ENCODE measurements at regions of chr11 and their contacts with region 1.

Region 1: DNA sequence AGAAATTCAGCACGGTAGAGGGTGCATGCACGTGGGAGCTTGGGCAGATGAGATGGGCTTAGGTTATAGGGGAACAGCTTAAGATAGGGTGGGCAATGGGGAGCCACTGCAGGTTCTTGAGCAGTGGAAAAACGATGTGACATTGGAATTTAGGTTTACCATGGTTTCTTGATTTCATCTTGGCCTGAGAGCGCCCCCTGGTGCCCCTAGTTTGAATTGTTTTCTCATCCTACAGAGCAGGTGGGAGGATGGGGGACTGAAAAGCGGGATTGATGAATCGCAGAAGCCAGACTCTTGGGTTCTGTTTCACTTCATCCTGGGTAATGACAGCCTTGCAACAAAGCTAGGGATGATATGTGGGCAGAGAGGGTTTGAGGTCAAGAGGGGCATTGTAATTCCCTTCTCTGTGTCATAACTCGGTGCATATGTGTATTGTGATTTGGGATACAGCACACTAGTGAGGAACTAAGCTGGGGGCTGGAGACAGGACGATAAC is 6.7 kb upstream of the MCAM start:
- DNase-seq: peak; percentile 69 to 80 (median 74)
- H3K4me3 ChIP-seq: no peak overlapping the region
- H3K4me3 Mint-ChIP-seq: peak overlapping the region in 4 of 8 donors; percentile 15 to 68 (median 40)
- H3K27ac ChIP-seq: no peak overlapping the region
- H3K27ac Mint-ChIP-seq: peak overlapping the region in 3 of 7 donors; percentile 38 to 82 (median 47)
- H3K4me1 ChIP-seq: peaks cover 40% of the 10 kb centered on the region
- H3K4me1 Mint-ChIP-seq: peaks cover 15 to 34% (median 24%) of the 10 kb centered on the region in 4 donors
- H3K27me3 ChIP-seq: no peaks in the 10 kb centered on the region
- H3K27me3 Mint-ChIP-seq: peaks cover 0 to 5% of the 10 kb centered on the region in 2 donors

Region 2: DNA sequence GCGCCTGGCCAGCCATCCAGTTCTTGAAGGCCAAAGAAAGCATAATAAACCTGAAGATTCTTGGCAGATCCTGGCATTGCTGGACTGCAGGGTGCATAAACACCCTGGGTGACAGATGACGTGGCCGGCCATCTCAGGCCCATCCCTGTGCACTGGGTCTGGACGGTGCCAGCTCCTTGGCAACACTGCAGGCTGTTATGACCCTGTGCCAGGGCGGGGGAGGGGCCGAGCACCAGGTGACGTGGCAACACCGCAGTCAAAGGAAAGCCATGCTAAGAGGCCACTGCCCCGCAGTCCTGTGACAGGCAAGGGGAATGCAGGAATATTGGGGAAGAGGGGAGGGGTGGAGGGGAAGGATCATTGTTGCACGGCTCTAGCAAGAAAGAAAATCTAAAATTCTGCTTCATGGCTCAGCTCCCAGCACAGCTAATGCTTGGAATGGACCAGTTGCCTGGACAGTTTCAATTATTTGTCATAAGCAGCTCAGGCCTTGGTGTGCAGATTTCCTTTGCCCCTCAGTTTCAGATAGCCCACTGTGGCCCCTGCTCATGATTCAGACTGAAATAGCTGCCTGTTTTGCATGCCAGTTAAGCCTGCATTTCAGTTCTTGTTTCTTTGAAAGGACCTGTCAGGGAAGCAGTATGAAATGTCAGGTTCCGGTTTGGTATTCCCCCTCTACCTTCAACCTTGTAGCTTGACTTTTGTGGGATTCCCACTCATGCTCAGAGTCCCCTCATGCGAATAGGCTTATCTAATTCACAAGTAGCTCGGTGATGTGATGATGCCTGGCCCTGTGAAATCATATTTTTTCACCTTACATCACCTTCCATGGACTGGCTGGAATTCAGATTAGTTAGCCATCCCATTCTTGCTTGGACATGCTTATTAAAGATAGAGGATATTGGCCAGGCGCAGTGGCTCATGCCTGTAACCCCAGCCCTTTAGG is 502.9 kb before region 1 on chr11:
- CTCF ChIA-PET with region 1: no interaction called
- POLR2A ChIA-PET with region 1: no interaction called
- intact Hi-C with region 1: no loop called
- DNase-seq: no peak
- H3K4me3 ChIP-seq: no peak overlapping the region
- H3K4me3 Mint-ChIP-seq: peak overlapping the region in 1 of 8 donors; percentile 34
- H3K27ac ChIP-seq: no peak overlapping the region
- H3K27ac Mint-ChIP-seq: peak overlapping the region in 3 of 7 donors; percentile 12 to 66 (median 62)
- H3K4me1 ChIP-seq: peaks cover 9% of the 10 kb centered on the region
- H3K4me1 Mint-ChIP-seq: peaks cover 5 to 9% (median 6%) of the 10 kb centered on the region in 4 donors
- H3K27me3 ChIP-seq: no peaks in the 10 kb centered on the region
- H3K27me3 Mint-ChIP-seq: no peaks in the 10 kb centered on the region

Region 3: DNA sequence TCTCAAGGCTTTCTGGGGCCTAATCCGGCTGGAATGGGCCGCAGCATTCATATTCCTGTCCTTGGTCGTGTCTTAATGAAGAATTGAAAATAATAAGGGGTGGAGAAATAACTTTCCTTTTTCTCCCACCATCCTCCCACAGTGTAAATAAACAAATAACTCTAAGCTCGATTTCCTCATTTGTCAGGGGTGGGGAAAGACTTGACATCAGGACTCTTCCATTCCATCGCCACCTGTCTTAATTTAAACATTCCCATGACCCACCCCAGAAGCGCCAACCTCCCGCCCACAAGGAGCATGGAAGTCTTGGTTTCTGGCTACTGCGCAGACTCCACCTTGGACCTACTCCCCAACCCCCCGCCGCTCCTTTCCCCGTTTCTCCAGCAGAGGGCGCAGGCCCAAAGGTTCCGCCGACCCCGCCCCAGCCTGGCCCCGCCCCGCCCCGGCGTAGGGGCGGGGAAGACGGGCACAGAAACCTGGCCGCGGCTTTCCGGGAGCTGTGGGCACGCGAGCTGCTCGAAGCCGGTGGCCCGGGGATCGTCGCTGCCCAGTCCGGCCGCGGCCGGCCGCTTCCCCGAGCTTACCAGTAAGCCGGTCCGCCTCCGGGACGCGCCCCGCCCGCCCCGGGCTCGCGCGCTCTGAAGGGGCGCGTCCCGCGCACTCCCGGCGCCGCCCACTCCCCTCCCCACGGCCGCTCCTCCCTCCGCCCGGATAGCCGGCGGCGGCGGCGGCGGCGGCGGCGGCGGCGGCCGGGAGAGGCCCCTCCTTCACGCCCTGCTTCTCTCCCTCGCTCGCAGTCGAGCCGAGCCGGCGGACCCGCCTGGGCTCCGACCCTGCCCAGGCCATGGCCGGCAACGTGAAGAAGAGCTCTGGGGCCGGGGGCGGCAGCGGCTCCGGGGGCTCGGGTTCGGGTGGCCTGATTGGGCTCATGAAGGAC is 117.7 kb before region 1 on chr11 and contains the start of gene CBL:
- CTCF ChIA-PET with region 1: interaction called, 45 read pairs
- POLR2A ChIA-PET with region 1: interaction called, 22 read pairs
- intact Hi-C with region 1: loop called (anchors 1 kb)
- DNase-seq: peak; percentile 91 to 95 (median 92)
- H3K4me3 ChIP-seq: peak within 1 kb of the TSS; percentile 64 to 94
- H3K4me3 Mint-ChIP-seq: peak within 1 kb of the TSS; percentile 91 to 100 (median 96)
- H3K27ac ChIP-seq: peak within 1 kb of the TSS; percentile 77
- H3K27ac Mint-ChIP-seq: peak within 1 kb of the TSS; percentile 80 to 96 (median 94)
- H3K4me1 ChIP-seq: peaks cover 35% of the 10 kb centered on the region
- H3K4me1 Mint-ChIP-seq: peaks cover 15 to 54% (median 28%) of the 10 kb centered on the region in 4 donors
- H3K27me3 ChIP-seq: no peaks in the 10 kb centered on the region
- H3K27me3 Mint-ChIP-seq: no peaks in the 10 kb centered on the region
- total RNA-seq, gene CBL: 39.5 to 39.8 TPM

Region 4: DNA sequence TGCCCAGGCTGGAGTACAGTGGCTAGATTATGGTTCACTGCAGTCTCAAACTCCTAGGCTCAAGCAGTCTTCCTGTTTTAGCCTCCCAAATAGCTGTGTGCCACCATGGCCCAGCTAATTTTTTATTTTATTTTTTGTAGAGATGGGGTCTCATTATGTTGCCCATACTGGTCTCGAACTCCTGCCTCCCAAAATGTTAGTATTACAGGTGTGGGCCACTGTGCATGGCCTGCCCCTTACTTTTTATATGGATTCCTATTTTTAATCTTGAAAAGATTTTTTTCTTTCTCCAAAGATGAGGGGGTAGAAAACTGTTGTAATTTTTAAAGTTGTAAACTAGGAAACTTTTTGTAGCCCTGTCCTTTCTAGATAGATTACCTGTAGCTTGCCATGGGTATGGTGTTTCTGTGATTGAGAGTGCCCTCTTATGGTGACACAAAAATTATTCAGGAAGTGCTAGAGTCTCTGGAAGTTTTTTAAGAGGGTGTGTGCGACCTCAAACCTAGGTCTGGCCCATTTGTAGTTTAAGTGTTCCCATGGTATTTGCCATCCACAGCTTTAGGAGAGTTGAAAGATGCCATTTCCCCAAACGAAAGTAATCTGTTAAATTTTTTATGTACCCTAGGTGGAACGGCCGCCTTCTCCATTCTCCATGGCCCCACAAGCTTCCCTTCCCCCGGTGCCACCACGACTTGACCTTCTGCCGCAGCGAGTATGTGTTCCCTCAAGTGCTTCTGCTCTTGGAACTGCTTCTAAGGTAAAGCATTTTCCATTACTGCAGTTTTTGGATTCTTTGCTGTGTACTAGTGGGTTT is 39.0 kb before region 1 on chr11:
- CTCF ChIA-PET with region 1: interaction called, 10 read pairs
- POLR2A ChIA-PET with region 1: no interaction called
- intact Hi-C with region 1: loop called (anchors 5 kb)
- DNase-seq: peak in 4 of 5 donors; percentile 62 to 64 (median 62)
- H3K4me3 ChIP-seq: no peak overlapping the region
- H3K4me3 Mint-ChIP-seq: peak overlapping the region in 1 of 8 donors; percentile 20
- H3K27ac ChIP-seq: no peak overlapping the region
- H3K27ac Mint-ChIP-seq: peak overlapping the region in 6 of 7 donors; percentile 30 to 87 (median 76)
- H3K4me1 ChIP-seq: peaks cover 9% of the 10 kb centered on the region
- H3K4me1 Mint-ChIP-seq: peaks cover 17 to 30% (median 21%) of the 10 kb centered on the region in 4 donors
- H3K27me3 ChIP-seq: no peaks in the 10 kb centered on the region
- H3K27me3 Mint-ChIP-seq: no peaks in the 10 kb centered on the region

Region 5: GRCh38 chr11:119334174-119334930 is 10.8 kb after region 1 on chr11 and contains the start of gene RNF26:
- CTCF ChIA-PET with region 1: interaction called, 146 read pairs
- POLR2A ChIA-PET with region 1: interaction called, 10 read pairs
- intact Hi-C with region 1: loop called (anchors 1 kb)
- DNase-seq: peak; percentile 93 to 96 (median 94)
- H3K4me3 ChIP-seq: peak within 1 kb of the TSS; percentile 86 to 91
- H3K4me3 Mint-ChIP-seq: peak within 1 kb of the TSS; percentile 97 to 99 (median 98)
- H3K27ac ChIP-seq: peak within 1 kb of the TSS; percentile 70
- H3K27ac Mint-ChIP-seq: peak within 1 kb of the TSS; percentile 92 to 98 (median 98)
- H3K4me1 ChIP-seq: peaks cover 27% of the 10 kb centered on the region
- H3K4me1 Mint-ChIP-seq: peaks cover 12 to 56% (median 36%) of the 10 kb centered on the region in 4 donors
- H3K27me3 ChIP-seq: peaks cover 5% of the 10 kb centered on the region
- H3K27me3 Mint-ChIP-seq: peaks cover 10% of the 10 kb centered on the region in 2 donors
- total RNA-seq, gene RNF26: 17.5 to 18.3 TPM

Region 6: DNA sequence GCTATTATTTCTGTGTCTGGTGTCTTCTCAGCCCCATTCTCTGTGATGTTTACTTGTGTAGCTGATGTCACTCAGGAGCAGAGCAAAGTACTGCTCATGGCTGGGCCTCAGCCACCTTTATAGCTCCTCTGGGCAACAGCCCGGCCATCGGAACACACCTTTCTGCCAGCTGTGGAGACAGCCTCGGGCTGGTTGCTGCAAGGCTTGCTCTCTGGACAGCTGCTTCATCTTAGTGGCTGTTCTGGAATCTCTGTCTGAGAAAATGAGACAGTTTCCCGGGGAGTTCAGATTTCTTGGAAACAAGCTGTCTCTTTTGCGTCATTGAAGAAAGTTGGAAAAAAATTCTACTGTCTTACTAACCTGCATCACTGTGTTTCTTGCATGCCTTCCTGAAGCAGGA is 79.4 kb after region 1 on chr11:
- CTCF ChIA-PET with region 1: no interaction called
- POLR2A ChIA-PET with region 1: no interaction called
- intact Hi-C with region 1: no loop called
- DNase-seq: no peak
- H3K4me3 ChIP-seq: no peak overlapping the region
- H3K4me3 Mint-ChIP-seq: no peak overlapping the region
- H3K27ac ChIP-seq: no peak overlapping the region
- H3K27ac Mint-ChIP-seq: no peak overlapping the region
- H3K4me1 ChIP-seq: no peaks in the 10 kb centered on the region
- H3K4me1 Mint-ChIP-seq: no peaks in the 10 kb centered on the region
- H3K27me3 ChIP-seq: no peaks in the 10 kb centered on the region
- H3K27me3 Mint-ChIP-seq: peaks cover 7 to 20% of the 10 kb centered on the region in 2 donors

Region 7: GRCh38 chr11:119567688-119568582 is 244.3 kb after region 1 on chr11:
- CTCF ChIA-PET with region 1: no interaction called
- POLR2A ChIA-PET with region 1: no interaction called
- intact Hi-C with region 1: no loop called
- DNase-seq: no peak
- H3K4me3 ChIP-seq: no peak overlapping the region
- H3K4me3 Mint-ChIP-seq: no peak overlapping the region
- H3K27ac ChIP-seq: no peak overlapping the region
- H3K27ac Mint-ChIP-seq: no peak overlapping the region
- H3K4me1 ChIP-seq: no peaks in the 10 kb centered on the region
- H3K4me1 Mint-ChIP-seq: no peaks in the 10 kb centered on the region
- H3K27me3 ChIP-seq: no peaks in the 10 kb centered on the region
- H3K27me3 Mint-ChIP-seq: peaks cover 5 to 6% of the 10 kb centered on the region in 2 donors

Measured in CD4-positive, alpha-beta memory T cell (primary cell).